Right ventricle myocardium superior (tissue), 1 donor: ENCODE measurements at regions of chr1 and their contacts with region 1.

Region 1: GRCh38 chr1:52296345-52296744 is 69.7 kb downstream of the CC2D1B start:
- DNase-seq: no peak
- ATAC-seq: peak; percentile 58

Region 2: GRCh38 chr1:52127181-52128180 is 168.9 kb before region 1 on chr1:
- intact Hi-C with region 1: loop called (anchors 5 kb)
- DNase-seq: no peak
- ATAC-seq: peak; percentile 62

Region 3: GRCh38 chr1:52141513-52142219 is 154.7 kb before region 1 on chr1 and contains the start of gene ZFYVE9:
- intact Hi-C with region 1: loop called (anchors 2 kb)
- DNase-seq: peak; percentile 85
- ATAC-seq: peak; percentile 98
- total RNA-seq, gene ZFYVE9: 18.4 TPM